ENCODE measurements at regions of chr2 and their contacts with region 1.

Region 1: DNA sequence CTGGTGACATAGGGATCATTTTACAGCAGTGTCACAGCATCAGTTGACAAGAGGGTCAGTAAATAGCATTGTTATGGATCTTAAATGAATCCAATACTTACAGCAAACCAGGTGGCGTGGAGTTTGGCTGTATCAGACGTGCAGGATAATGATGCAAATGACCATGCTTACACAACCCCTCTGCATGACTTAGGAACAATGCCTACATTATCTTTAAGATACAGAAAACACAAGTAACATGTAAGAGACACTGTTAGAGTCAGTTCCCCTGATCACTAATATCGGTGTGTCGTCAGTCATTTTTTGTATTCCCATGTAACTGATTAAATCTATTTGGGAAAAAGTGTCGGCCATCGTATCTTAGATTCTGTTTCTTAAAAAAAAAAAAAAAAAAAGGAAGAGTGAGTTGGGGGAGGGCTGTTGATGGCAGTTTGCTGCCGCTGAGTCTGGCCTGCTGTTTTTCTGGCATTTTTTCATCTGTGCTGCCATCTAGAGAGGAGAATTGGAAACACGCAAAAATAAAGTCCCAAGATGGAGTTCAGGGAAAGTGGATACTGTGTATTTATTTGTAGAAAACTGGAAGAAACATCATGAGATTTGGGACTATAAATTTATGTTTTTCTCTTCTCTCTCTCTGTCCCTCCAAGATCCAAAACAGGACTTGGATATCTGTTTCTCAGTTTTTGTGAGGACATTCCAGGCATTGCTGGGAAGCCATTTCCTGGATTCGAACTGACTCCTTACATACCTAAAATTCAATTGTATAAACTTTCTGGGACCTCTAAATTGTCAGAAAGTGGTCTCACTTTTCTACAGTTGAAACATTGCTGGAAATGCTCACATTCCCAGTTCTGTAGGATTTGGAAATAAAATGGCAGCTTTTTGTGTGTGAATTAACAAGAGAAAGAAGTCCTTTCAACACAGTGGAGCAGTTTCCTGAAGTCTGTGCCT is 60.3 kb upstream of the AGPS start:
- DNase-seq: peak in 37 of 42 donors; percentile 6 to 82 (median 56)

Region 2: GRCh38 chr2:177138823-177139222 is 193.5 kb before region 1 on chr2:
- intact Hi-C with region 1: no loop called
- DNase-seq: no peak

Region 3: GRCh38 chr2:177164584-177165052 is 167.7 kb before region 1 on chr2:
- intact Hi-C with region 1: loop called (anchors 2 kb)
- DNase-seq: peak; percentile 81 to 96 (median 90)

Region 4: GRCh38 chr2:177263451-177264208 is 68.7 kb before region 1 on chr2:
- intact Hi-C with region 1: loop called (anchors 2 kb)
- DNase-seq: peak; percentile 92 to 99 (median 97)

Region 5: DNA sequence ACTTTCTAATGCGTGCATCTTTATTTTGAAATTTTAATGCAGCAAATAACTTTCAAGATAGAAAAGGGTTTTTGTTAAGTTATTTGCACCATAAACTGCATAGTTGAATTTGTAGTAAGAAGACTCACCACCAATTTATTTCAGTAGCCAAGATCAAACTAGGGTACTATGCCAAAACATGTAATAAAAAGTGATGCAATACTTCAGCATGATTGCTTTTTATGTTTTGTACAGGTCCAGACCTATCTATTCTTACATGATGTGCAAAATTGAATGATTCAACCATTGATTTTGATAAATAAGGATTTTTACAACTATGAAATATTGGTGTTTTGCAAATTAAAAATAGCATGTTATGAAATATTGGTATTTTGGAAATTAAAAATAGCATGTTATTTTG is 87.0 kb after region 1 on chr2:
- intact Hi-C with region 1: loop called (anchors 5 kb)
- DNase-seq: no peak

Region 6: DNA sequence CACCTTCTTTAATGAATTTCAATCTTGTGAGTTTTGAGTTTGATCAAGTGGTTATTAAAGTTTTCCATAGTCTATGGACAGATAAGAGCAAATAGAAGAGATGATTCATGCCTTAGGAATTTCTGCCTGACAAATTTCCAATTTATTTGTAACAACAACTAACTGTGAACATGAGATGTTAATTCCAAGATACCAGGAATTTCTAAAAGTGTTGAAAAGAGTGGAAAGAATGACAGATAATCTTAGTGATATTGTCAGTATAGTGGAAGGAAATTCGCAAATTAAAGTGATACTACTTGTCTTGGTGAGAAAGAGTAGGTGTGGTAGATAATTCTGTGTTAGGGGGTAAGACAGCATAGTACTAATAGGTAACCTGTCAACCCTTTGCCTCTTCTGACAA is 142.7 kb after region 1 on chr2:
- intact Hi-C with region 1: no loop called
- DNase-seq: no peak

Region 7: DNA sequence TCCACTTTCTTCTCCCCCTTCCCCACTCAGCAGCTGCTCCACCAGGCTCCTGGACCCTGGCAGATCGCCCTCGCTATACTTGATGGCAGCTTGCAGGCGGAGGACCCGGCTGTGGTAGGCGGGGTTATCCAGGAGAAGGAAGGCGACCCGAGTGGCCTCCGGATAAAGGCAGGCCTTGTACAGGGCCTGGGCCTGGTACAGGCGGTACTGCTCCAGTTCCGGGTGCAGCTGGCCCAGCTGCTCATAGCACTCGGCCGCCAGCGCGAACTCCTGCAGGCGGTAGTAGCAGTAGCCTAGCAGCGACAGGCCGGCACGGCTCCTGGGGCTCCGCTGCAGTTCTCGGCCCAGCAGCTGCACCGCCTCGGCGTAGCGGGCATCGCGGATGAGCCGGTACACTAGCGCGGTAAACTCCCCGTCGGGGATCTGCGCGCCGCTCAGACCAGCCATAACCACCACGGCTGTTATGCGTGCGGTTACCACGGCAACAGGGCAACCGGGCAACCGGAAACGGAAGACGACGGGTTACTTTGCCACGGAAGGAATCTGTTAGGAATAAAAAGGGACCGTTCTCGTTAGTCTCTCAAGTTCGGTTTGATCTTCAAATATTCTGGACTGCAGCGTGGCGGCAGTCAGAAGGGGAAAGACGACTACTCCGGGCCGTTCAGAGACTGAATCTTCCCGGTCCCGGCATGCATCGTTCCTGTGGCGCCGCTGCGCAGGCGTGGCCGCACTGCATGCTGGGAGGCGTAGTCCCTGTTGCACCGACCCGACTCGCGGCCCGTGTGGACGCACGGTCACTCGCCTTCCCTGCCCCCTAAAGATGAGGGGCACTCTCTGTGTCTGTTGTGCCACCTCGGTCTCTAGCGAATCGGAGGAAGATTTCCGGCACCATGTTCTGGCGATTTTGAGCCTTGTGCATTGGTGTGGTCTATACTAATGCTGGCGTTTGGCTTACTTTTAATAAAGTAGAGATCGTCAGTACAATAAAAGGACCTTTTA is 286.2 kb after region 1 on chr2:
- intact Hi-C with region 1: loop called (anchors 10 kb)
- DNase-seq: peak; percentile 89 to 98 (median 95)

Region 8: DNA sequence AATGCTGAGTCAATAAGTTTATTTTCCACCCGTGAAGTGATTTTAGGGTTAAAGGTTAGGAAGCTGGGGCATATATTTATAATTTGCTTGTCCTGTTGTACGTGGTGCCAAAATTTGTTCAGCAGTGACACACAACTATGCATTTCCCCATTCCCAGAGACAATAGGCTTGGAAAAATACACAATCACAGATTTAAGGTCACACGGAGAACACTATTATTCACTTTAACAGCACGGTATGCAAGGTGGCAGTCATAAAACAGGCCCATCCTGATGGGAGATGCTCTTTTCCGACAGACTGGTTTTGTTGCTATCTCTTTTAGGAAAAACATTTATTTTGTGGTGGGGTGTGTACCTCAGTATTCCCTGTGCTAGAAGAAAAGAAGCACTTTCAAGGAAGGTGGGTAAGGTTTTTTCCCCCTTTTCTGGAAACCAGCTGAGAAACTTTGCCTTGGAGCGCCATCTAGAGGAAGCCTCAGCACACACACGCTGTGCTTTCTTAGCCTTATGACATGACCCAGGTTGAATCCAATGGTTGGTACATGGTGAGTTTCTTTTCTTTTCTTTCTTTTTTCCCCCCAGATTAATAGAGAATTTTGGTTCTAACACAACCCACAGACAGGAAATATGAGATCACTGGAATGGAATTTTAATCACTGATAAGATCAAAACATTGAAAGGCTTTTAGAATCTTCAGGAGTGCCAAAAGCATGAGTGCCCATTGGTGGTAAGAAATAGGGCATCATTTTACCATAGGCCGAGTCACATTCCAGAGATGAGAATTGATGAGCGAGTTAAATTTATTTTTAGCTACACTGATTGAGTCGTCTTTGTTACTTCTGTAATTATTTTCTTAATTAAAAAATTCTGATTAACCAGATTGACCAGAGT is 392.3 kb after region 1 on chr2:
- intact Hi-C with region 1: loop called (anchors 5 kb)
- DNase-seq: peak; percentile 12 to 86 (median 70)